ENCODE measurements at regions of chr5 and their contacts with region 1.

Region 1: GRCh38 chr5:80083101-80083890 is 48.1 kb downstream of the THBS4 start:
- DNase-seq: peak; percentile 87
- H3K4me3 ChIP-seq: peak overlapping the region; percentile 33
- H3K27ac ChIP-seq: no peak overlapping the region
- H3K4me1 ChIP-seq: peaks cover 4% of the 10 kb centered on the region
- H3K27me3 ChIP-seq: no peaks in the 10 kb centered on the region
- CTCF ChIP-seq: peak; percentile 79

Region 2: GRCh38 chr5:79020861-79021561 is 1062.3 kb before region 1 on chr5:
- CTCF ChIA-PET with region 1: interaction called, 24 read pairs
- POLR2A ChIA-PET with region 1: no interaction called
- intact Hi-C with region 1: loop called (anchors 2 kb)
- DNase-seq: peak; percentile 73
- H3K4me3 ChIP-seq: no peak overlapping the region
- H3K27ac ChIP-seq: no peak overlapping the region
- H3K4me1 ChIP-seq: peaks cover 10% of the 10 kb centered on the region
- H3K27me3 ChIP-seq: peaks cover 24% of the 10 kb centered on the region
- CTCF ChIP-seq: peak; percentile 94

Region 3: GRCh38 chr5:79255786-79256557 is 827.3 kb before region 1 on chr5:
- CTCF ChIA-PET with region 1: no interaction called
- POLR2A ChIA-PET with region 1: no interaction called
- intact Hi-C with region 1: loop called (anchors 5 kb)
- DNase-seq: peak; percentile 66
- H3K4me3 ChIP-seq: no peak overlapping the region
- H3K27ac ChIP-seq: no peak overlapping the region
- H3K4me1 ChIP-seq: peaks cover 6% of the 10 kb centered on the region
- H3K27me3 ChIP-seq: no peaks in the 10 kb centered on the region
- CTCF ChIP-seq: peak; percentile 89

Region 4: GRCh38 chr5:79857714-79858409 is 225.4 kb before region 1 on chr5:
- CTCF ChIA-PET with region 1: interaction called, 4 read pairs
- POLR2A ChIA-PET with region 1: no interaction called
- intact Hi-C with region 1: loop called (anchors 1 kb)
- DNase-seq: peak; percentile 72
- H3K4me3 ChIP-seq: no peak overlapping the region
- H3K27ac ChIP-seq: no peak overlapping the region
- H3K4me1 ChIP-seq: no peaks in the 10 kb centered on the region
- H3K27me3 ChIP-seq: peaks cover 18% of the 10 kb centered on the region
- CTCF ChIP-seq: peak; percentile 97

Region 5: DNA sequence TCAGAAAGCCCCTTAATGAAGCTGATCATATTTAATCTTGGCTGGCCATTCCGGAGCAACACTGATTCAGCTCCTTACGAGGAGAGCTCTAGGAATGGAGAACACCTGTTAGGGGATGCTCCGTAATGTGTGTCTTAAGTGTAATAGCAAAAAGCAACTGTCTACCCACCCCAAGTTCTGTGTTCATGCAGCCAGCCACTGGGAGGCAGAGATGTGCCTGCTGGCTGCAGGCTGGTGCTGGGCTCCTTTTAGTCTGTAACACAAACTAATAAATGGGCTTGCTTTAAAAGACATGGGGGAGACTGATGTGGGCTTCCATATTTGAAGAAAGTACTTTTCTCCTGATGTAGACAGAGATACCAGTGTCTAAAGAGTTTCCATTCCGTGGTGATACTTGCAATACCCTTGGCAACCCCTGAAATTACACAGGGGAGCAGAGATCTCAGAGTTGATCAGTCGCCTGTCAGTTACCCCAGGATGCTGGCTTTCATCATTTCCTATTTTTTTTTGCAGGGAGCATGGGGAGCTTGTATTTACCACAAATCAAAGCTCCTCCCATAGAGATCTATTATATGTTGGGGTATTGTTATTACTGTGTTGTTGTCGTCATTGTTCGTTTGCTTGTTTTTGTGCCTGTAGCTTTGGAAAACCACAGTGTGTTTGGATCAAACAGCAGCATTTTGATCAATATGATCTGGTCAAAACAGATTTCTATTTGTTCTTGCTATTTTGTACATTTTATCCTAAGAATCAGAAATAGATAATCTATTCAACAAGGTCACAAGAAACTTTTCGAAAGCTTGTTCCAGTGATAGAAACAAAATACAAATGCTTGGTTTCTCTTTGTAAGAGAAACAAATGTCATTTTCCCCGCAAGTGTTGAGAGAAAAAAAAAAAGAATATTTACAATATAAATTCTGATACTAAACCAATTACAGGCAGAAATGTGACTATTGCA is 158.1 kb before region 1 on chr5:
- CTCF ChIA-PET with region 1: interaction called, 4 read pairs
- POLR2A ChIA-PET with region 1: no interaction called
- intact Hi-C with region 1: loop called (anchors 5 kb)
- DNase-seq: peak; percentile 18
- H3K4me3 ChIP-seq: no peak overlapping the region
- H3K27ac ChIP-seq: no peak overlapping the region
- H3K4me1 ChIP-seq: no peaks in the 10 kb centered on the region
- H3K27me3 ChIP-seq: no peaks in the 10 kb centered on the region
- CTCF ChIP-seq: peak; percentile 51

Region 6: DNA sequence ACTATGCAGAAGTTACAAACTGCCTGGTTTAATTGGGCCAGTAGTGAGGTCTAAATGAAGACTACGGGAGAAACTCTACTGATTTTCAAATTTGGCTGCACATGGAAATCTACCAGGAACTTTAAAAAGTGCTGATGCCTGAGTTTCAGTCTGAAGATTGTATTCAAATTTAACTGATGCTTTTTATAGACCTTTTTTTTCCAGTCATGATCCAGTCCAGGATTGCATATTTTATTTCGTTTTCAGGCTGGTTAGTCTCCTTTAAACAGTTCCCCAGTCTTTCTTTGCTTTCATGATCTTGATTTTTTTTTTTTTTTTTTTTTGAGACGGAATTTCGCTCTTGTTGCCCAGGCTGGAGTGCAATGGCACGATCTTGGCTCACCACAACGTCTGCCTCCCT is 212.8 kb after region 1 on chr5:
- CTCF ChIA-PET with region 1: no interaction called
- POLR2A ChIA-PET with region 1: no interaction called
- intact Hi-C with region 1: no loop called
- DNase-seq: no peak
- H3K4me3 ChIP-seq: no peak overlapping the region
- H3K27ac ChIP-seq: no peak overlapping the region
- H3K4me1 ChIP-seq: no peaks in the 10 kb centered on the region
- H3K27me3 ChIP-seq: no peaks in the 10 kb centered on the region
- CTCF ChIP-seq: no peak

Measured in A673 (cell line).